Activated CD4-positive, alpha-beta T cell treated with anti-CD3 and anti-CD28 coated beads, Interleukin-2, amount 10 ng/mL, durations not matched to agents 24 days and 14 days (primary cell): ENCODE measurements at regions of chr15 and their contacts with region 1.

Region 1: GRCh38 chr15:44045217-44045616 is 149.9 kb downstream of the FRMD5 start:
- DNase-seq: no peak
- H3K4me3 Mint-ChIP-seq: no peak overlapping the region
- H3K27ac Mint-ChIP-seq: no peak overlapping the region
- H3K4me1 Mint-ChIP-seq: peaks cover 5% of the 10 kb centered on the region
- H3K27me3 Mint-ChIP-seq: peaks cover 18% of the 10 kb centered on the region

Region 2: DNA sequence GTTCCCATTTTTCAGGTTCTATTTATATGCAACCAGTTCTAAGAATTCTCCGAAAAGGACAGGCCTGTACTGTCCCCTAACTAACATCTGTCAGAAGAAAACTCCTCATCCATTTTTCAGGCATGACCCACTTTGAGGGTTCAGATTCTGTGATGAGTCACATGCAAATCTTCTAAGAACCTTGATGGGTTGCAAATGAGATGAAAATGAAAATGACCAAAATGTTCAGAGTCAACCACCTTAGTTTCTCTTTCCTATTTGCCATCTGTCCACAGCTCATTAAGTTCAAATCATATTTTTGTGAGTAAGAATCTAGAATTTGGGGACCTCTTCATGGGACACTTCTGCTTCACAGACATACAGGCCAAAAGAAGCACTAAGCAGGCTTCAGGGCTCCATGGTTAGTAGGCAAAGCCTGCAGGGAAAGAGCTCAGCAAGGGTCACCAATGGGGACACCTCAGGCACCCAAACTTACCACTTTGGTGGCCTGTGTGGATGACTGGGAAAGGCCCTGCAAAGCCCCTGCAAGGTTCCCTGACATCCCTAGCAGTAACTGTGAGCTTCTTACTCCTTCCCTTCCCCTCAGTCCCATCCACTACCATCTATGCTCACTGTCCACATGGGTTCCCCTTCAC is 96.4 kb before region 1 on chr15:
- intact Hi-C with region 1: loop called (anchors 5 kb)
- DNase-seq: no peak
- H3K4me3 Mint-ChIP-seq: peak overlapping the region; percentile 23
- H3K27ac Mint-ChIP-seq: peak overlapping the region; percentile 81
- H3K4me1 Mint-ChIP-seq: peaks cover 21% of the 10 kb centered on the region
- H3K27me3 Mint-ChIP-seq: no peaks in the 10 kb centered on the region

Region 3: GRCh38 chr15:44195151-44195740 is 150.0 kb after region 1 on chr15 and contains the start of gene FRMD5:
- intact Hi-C with region 1: no loop called
- DNase-seq: peak; percentile 94
- H3K4me3 Mint-ChIP-seq: peak within 1 kb of the TSS; percentile 83
- H3K27ac Mint-ChIP-seq: no peak within 1 kb of the TSS
- H3K4me1 Mint-ChIP-seq: peaks cover 14% of the 10 kb centered on the region
- H3K27me3 Mint-ChIP-seq: peaks cover 68% of the 10 kb centered on the region
- total RNA-seq, gene FRMD5: 0.09 TPM in 1 of 2 replicates, not detected in the other